ENCODE measurements at regions of chr13 and their contacts with region 1.

Region 1: GRCh38 chr13:108572782-108573211 is 56.6 kb upstream of the MYO16 start:
- DNase-seq: no peak
- ATAC-seq: no peak
- H3K4me3 ChIP-seq: no peak overlapping the region
- H3K27ac ChIP-seq: no peak overlapping the region
- H3K4me1 ChIP-seq: no peaks in the 10 kb centered on the region
- H3K27me3 ChIP-seq: no peaks in the 10 kb centered on the region
- CTCF ChIP-seq: no peak
- EP300 ChIP-seq: no peak
- POLR2A ChIP-seq: no peak
- RAD21 ChIP-seq: no peak

Region 2: DNA sequence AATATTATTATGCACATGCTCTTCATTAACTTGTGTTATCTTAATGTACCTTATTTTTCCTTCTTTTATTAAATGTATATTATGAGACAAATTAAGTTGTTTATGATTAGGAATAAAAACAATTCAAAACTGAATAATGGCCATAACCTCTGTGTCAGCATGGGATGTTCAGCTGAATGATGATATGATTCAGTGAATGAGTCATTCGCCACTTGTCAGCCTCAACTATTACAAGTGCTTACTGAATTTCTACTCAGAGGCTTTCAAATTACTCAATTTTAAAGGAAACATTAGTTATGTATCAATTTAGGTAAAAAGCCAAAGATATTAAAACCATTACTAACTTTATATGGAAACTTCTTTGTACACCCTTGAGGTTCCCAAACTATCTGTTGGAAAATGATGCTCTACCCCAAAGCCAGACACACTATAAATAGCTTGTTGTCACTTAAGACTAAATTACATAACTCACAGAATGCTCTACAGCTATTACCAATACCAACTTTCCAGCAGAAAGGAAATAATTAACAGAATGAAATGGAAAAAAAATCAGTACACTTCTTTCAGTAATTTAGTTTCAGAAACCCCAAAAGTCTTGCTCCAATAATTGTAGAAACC is 371.9 kb before region 1 on chr13:
- CTCF ChIA-PET with region 1: no interaction called
- POLR2A ChIA-PET with region 1: no interaction called
- RAD21 ChIA-PET with region 1: no interaction called
- SMC1A ChIA-PET with region 1: no interaction called
- in situ Hi-C with region 1: no loop called
- intact Hi-C with region 1: no loop called
- DNase-seq: no peak
- ATAC-seq: no peak
- H3K4me3 ChIP-seq: no peak overlapping the region
- H3K27ac ChIP-seq: no peak overlapping the region
- H3K4me1 ChIP-seq: no peaks in the 10 kb centered on the region
- H3K27me3 ChIP-seq: no peaks in the 10 kb centered on the region
- CTCF ChIP-seq: no peak
- EP300 ChIP-seq: no peak
- POLR2A ChIP-seq: no peak
- RAD21 ChIP-seq: no peak

Region 3: DNA sequence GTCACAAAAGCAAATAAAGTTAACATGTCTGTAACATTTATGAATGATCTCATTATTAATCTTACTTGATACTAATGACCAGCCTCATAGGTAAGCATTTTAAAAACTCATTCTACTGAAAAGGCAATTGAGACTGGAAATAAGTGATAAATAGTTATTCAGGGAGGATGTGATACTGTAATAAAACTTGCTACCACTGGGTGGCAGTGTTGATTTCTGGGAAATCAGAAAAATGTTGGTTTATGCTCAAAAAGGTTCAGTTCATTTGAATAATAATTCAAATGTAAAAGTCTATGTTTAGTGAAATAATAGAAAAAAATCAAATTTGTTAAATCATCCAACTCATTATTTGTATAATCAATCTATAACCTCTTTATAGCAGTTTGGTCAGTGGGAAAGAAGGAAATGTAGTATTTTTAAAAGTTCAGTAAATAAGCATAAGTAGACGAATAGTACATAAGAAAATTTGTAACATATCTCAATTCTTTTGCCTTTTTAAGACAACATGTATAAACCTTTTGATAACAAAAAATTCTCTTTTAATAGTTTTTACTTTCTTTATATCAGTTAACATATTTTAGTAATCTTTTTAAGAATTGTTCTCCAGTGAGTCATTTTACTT is 345.0 kb before region 1 on chr13:
- CTCF ChIA-PET with region 1: no interaction called
- POLR2A ChIA-PET with region 1: no interaction called
- RAD21 ChIA-PET with region 1: no interaction called
- SMC1A ChIA-PET with region 1: no interaction called
- in situ Hi-C with region 1: no loop called
- intact Hi-C with region 1: loop called (anchors 10 kb)
- DNase-seq: no peak
- ATAC-seq: peak; percentile 18; the same call in 1 of the 3 replicates
- H3K4me3 ChIP-seq: no peak overlapping the region
- H3K27ac ChIP-seq: no peak overlapping the region
- H3K4me1 ChIP-seq: peaks cover 7% of the 10 kb centered on the region
- H3K27me3 ChIP-seq: no peaks in the 10 kb centered on the region
- CTCF ChIP-seq: peak; percentile 58 to 60 (median 58); a peak in 5 of 6 replicates
- EP300 ChIP-seq: no peak
- POLR2A ChIP-seq: no peak
- RAD21 ChIP-seq: peak; percentile 76

Region 4: DNA sequence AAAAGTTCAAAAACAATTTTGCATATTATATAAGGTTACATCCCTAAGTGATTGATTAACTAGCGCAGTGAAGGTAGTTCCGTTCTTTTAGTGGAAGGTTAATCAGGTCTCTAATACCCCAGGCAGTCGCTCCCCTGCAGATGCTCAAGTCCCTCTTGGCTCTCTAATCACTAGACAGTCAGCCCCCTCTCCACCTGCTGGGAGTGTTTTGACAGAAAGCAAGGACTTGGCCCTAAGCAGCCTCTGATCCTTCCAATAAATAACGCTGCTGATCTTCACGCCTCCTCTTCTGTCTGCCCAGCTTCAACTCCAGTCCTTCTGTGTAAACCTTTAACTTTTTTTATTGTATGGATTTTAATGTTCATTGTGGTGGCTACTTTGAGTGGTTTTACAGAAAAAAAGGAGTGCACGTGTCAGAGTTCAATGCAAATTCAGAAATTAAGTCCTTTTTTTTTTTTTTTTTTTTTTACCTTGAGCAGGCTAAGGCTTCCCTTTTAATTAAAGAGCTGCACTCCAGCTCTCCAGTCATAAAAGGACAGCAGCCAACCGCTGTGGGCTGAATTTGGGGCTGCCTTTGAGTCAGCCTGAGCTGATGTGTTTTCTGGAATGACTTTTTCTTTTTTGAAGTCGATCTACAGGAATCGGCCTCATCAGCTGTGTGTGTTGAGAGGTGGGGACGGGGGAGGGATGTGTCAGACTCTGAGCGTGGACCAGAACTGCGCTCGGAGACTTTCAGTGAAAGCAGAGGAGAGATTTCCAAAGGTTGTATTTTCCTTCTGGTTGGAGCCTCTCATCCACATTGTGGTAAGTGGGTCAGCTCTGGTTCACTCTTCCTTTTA is 22.9 kb after region 1 on chr13:
- CTCF ChIA-PET with region 1: interaction called, 9 read pairs
- POLR2A ChIA-PET with region 1: interaction called, 7 read pairs
- RAD21 ChIA-PET with region 1: interaction called, 33 read pairs
- SMC1A ChIA-PET with region 1: interaction called, 24 read pairs
- in situ Hi-C with region 1: no loop called
- intact Hi-C with region 1: no loop called
- DNase-seq: no peak
- ATAC-seq: peak; percentile 82
- H3K4me3 ChIP-seq: no peak overlapping the region
- H3K27ac ChIP-seq: no peak overlapping the region
- H3K4me1 ChIP-seq: no peaks in the 10 kb centered on the region
- H3K27me3 ChIP-seq: no peaks in the 10 kb centered on the region
- CTCF ChIP-seq: no peak
- EP300 ChIP-seq: no peak
- POLR2A ChIP-seq: no peak
- RAD21 ChIP-seq: no peak

Region 5: GRCh38 chr13:108618233-108618632 is 45.4 kb after region 1 on chr13:
- CTCF ChIA-PET with region 1: no interaction called
- POLR2A ChIA-PET with region 1: no interaction called
- RAD21 ChIA-PET with region 1: no interaction called
- SMC1A ChIA-PET with region 1: no interaction called
- in situ Hi-C with region 1: no loop called
- intact Hi-C with region 1: no loop called
- DNase-seq: no peak
- ATAC-seq: no peak
- H3K4me3 ChIP-seq: no peak overlapping the region
- H3K27ac ChIP-seq: no peak overlapping the region
- H3K4me1 ChIP-seq: no peaks in the 10 kb centered on the region
- H3K27me3 ChIP-seq: no peaks in the 10 kb centered on the region
- CTCF ChIP-seq: no peak
- EP300 ChIP-seq: no peak
- POLR2A ChIP-seq: no peak
- RAD21 ChIP-seq: no peak

Region 6: GRCh38 chr13:108662528-108662927 is 89.7 kb after region 1 on chr13:
- CTCF ChIA-PET with region 1: no interaction called
- POLR2A ChIA-PET with region 1: interaction called, 4 read pairs
- RAD21 ChIA-PET with region 1: interaction called, 10 read pairs
- SMC1A ChIA-PET with region 1: no interaction called
- in situ Hi-C with region 1: no loop called
- intact Hi-C with region 1: no loop called
- DNase-seq: no peak
- ATAC-seq: no peak
- H3K4me3 ChIP-seq: no peak overlapping the region
- H3K27ac ChIP-seq: no peak overlapping the region
- H3K4me1 ChIP-seq: no peaks in the 10 kb centered on the region
- H3K27me3 ChIP-seq: no peaks in the 10 kb centered on the region
- CTCF ChIP-seq: no peak
- EP300 ChIP-seq: no peak
- POLR2A ChIP-seq: no peak
- RAD21 ChIP-seq: no peak

Measured in GM12878 (cell line).